OCI-LY7 (cell line): ENCODE measurements at regions of chr12 and their contacts with region 1.

Region 1: DNA sequence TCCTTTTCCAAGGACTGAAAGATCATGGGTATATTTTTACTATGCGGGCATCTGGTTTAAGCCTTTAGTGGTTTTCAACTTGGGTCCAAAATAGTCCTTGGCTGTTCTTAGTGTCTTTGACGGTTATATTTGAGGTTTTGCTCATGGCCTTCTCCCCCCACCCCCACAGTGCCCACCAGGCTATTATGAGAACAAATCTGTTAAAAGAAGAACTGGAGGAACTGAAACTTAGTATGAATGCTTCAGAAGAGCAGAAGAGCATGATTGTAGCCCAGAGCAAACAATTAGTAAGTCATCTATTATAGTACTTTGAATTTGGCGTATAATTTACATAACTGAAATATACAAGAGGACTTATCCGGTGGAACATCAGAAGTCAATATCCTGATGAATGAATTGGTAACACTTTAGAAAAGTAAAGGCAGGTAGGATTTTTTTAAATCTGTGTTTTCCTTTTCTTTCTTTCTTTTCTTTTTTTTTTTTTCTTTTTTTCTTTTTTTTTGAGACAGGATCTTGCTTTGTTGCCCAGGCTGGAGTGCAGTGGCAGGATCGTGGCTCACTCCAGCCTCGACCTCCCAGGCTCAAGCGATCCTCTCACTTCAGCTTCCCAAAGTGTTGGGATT is 71.8 kb upstream of the BCAT1 start:
- DNase-seq: peak; percentile 96
- H3K4me3 ChIP-seq: peak overlapping the region; percentile 47
- H3K27ac ChIP-seq: peak overlapping the region; percentile 98
- H3K4me1 ChIP-seq: peaks cover 94% of the 10 kb centered on the region
- CTCF ChIP-seq: no peak

Region 2: GRCh38 chr12:24780697-24781368 is 239.9 kb before region 1 on chr12:
- CTCF ChIA-PET with region 1: no interaction called
- POLR2A ChIA-PET with region 1: no interaction called
- intact Hi-C with region 1: no loop called
- DNase-seq: peak; percentile 27
- H3K4me3 ChIP-seq: no peak overlapping the region
- H3K27ac ChIP-seq: no peak overlapping the region
- H3K4me1 ChIP-seq: no peaks in the 10 kb centered on the region
- CTCF ChIP-seq: peak; percentile 74

Region 3: DNA sequence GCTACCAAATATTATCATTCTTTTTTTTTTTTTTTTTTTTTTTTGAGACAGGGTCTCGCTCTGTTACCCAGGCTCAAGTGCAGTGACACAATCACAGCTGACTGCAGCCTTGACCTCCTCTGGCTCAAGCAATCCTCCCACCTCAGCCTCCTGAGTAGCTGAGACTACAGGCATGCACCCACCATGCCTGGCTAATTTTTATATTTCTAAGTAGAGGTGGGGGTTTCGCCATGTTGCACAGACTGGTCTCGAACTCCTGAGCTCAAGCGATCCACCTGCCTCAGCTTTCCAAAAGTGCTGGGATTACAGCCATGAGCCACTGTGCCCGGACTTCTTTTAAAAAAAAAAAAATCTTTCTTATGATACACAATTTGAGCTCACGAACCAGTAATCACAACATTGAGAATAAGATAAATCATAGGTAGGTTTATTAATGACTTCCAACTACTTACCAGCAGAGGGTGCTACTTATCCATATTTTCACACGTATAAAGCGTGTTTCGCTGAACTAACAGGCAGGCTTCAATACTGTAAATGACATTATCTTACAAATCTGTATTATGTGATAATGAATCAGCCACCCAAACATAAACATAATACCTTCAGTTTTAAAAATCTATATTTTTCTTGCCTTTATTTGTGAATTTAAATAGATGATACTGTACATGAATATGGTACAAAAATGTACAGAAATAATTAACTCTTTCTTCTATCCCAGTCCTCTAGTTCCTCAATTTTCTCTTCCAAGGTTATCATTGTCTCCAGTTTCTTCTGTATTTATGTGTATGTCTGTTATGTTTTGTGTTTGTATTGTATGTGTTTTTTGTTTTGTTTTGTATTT is 29.3 kb before region 1 on chr12:
- CTCF ChIA-PET with region 1: interaction called, 12 read pairs
- POLR2A ChIA-PET with region 1: interaction called, 854 read pairs
- intact Hi-C with region 1: no loop called
- DNase-seq: peak; percentile 90
- H3K4me3 ChIP-seq: no peak overlapping the region
- H3K27ac ChIP-seq: peak overlapping the region; percentile 73
- H3K4me1 ChIP-seq: peaks cover 58% of the 10 kb centered on the region
- CTCF ChIP-seq: peak; percentile 94

Region 4: GRCh38 chr12:25005376-25005775 is 15.4 kb before region 1 on chr12:
- CTCF ChIA-PET with region 1: interaction called, 8 read pairs
- POLR2A ChIA-PET with region 1: interaction called, 854 read pairs
- intact Hi-C with region 1: loop called (anchors 1 kb)
- DNase-seq: peak; percentile 76
- H3K4me3 ChIP-seq: peak overlapping the region; percentile 30
- H3K27ac ChIP-seq: peak overlapping the region; percentile 90
- H3K4me1 ChIP-seq: peaks cover 86% of the 10 kb centered on the region
- CTCF ChIP-seq: peak; percentile 61

Region 5: DNA sequence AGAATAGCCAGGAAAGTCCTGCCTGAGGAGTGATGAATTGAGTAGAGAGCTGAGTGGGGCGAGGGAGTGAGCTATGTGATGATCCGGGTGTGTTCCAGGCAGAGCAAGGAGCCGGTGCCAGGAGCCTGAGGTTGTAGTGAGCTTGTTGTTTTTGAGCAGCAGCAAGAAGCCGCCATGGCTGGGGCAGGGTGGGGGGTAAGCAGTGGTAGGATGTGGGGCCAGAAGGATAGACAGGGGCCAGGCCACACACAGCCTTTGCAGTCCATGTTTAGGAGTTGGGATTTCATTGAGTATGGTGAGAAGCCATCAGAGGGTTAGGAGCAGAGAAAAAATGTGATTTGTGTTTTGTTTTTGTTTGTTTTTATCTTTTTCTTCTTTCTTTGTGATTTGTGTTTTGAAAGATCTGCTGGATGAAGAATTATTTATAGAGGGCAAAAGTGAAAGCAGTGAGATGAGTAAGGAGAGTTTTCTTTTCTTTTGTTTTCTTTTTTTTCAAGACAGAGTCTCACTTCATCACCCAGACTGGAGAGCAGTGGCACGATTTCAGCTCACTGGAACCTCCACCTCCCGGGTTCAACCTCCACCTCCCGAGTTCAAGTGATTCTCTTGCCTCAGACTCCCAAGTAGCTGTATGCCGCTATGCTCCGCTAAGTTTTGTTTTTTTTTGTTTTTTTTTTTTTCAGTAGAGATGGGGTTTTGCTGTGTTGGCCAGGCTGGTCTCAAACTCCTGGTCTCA is 20.4 kb after region 1 on chr12:
- CTCF ChIA-PET with region 1: no interaction called
- POLR2A ChIA-PET with region 1: interaction called, 61 read pairs
- intact Hi-C with region 1: no loop called
- DNase-seq: no peak
- H3K4me3 ChIP-seq: no peak overlapping the region
- H3K27ac ChIP-seq: no peak overlapping the region
- H3K4me1 ChIP-seq: no peaks in the 10 kb centered on the region
- CTCF ChIP-seq: no peak

Region 6: DNA sequence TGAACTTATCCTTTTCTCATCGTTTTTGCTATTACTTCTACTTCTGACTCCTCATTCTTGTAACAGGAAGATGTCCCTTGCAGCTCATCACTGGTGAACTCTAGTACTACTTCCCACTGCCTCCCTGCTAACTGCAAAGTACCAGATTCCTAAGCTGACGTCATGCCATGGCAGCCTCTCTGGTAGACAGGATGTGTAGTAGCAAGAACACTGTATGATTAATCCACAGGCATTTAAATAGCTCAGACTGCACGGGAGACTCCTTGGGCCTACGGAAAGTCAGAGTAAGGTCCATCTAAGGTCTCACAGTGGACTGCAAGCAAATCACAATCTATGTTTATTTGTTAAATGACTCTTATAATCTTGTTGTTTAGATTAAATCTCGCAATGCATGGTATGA is 130.7 kb after region 1 on chr12:
- CTCF ChIA-PET with region 1: no interaction called
- POLR2A ChIA-PET with region 1: no interaction called
- intact Hi-C with region 1: no loop called
- DNase-seq: no peak
- H3K4me3 ChIP-seq: no peak overlapping the region
- H3K27ac ChIP-seq: no peak overlapping the region
- H3K4me1 ChIP-seq: peaks cover 12% of the 10 kb centered on the region
- CTCF ChIP-seq: no peak